IMR-90 (cell line): ENCODE measurements at regions of chr1 and their contacts with region 1.

Region 1: DNA sequence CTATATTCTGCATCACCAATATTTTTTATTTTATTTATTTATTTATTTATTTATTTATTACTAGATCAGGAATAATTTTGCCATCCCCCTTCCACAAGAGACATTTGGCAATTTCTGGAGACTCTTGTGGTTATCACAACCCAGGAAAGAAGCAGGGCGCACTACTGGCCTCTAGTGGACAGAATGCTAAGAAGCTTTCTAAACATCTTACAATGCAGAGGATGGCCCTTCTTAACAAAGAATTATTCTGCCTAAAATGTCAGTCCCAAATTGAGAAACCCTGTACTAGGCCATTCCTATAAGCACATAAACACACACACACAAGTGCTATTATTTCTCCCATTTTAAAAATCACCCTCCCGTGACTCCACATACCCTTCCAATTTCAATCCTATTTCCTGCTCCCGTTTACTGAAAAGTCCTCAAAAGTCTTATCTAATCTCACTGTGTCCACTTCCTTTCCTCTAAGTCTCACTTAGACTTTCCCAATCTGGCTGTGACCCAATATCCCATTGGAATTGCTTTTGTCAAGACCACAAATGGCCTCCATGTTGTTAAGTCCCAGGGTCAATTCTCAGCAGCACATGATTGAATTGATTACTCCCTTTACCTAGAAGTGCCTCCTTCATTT is 43.7 kb upstream of the RNF11 start:
- DNase-seq: peak; percentile 80
- ATAC-seq: peak; percentile 93
- H3K4me3 ChIP-seq: no peak overlapping the region
- H3K27ac ChIP-seq: no peak overlapping the region
- H3K4me1 ChIP-seq: no peaks in the 10 kb centered on the region
- H3K27me3 ChIP-seq: no peaks in the 10 kb centered on the region; the same call in 1 of the 2 replicates
- CTCF ChIP-seq: peak; percentile 82
- POLR2A ChIP-seq: no peak
- RAD21 ChIP-seq: peak; percentile 67

Region 2: GRCh38 chr1:50368179-50369012 is 823.9 kb before region 1 on chr1:
- CTCF ChIA-PET with region 1: no interaction called
- POLR2A ChIA-PET with region 1: no interaction called
- dilution Hi-C with region 1: no loop called
- in situ Hi-C with region 1: loop called (anchors 25 kb)
- intact Hi-C with region 1: loop called (anchors 5 kb)
- DNase-seq: peak; percentile 6
- ATAC-seq: peak; percentile 88
- H3K4me3 ChIP-seq: no peak overlapping the region
- H3K27ac ChIP-seq: no peak overlapping the region
- H3K4me1 ChIP-seq: no peaks in the 10 kb centered on the region
- H3K27me3 ChIP-seq: peaks cover 7% of the 10 kb centered on the region
- CTCF ChIP-seq: peak; percentile 78
- POLR2A ChIP-seq: 0 out of 2 replicates have a peak, but pooled peaks have one; percentile 45
- RAD21 ChIP-seq: peak; percentile 88

Region 3: GRCh38 chr1:50774759-50775351 is 417.5 kb before region 1 on chr1:
- CTCF ChIA-PET with region 1: interaction called, 21 read pairs
- POLR2A ChIA-PET with region 1: no interaction called
- dilution Hi-C with region 1: no loop called
- in situ Hi-C with region 1: loop called (anchors 5 kb)
- intact Hi-C with region 1: loop called (anchors 1 kb)
- DNase-seq: peak; percentile 74
- ATAC-seq: peak; percentile 60
- H3K4me3 ChIP-seq: no peak overlapping the region
- H3K27ac ChIP-seq: no peak overlapping the region
- H3K4me1 ChIP-seq: no peaks in the 10 kb centered on the region
- H3K27me3 ChIP-seq: no peaks in the 10 kb centered on the region
- CTCF ChIP-seq: peak; percentile 78
- POLR2A ChIP-seq: no peak
- RAD21 ChIP-seq: peak; percentile 83

Region 4: GRCh38 chr1:50929376-50929958 is 262.9 kb before region 1 on chr1:
- CTCF ChIA-PET with region 1: interaction called, 7 read pairs
- POLR2A ChIA-PET with region 1: no interaction called
- dilution Hi-C with region 1: no loop called
- in situ Hi-C with region 1: loop called (anchors 10 kb)
- intact Hi-C with region 1: loop called (anchors 1 kb)
- DNase-seq: peak; percentile 59
- ATAC-seq: peak; percentile 54; the same call in 1 of the 2 replicates
- H3K4me3 ChIP-seq: no peak overlapping the region
- H3K27ac ChIP-seq: no peak overlapping the region
- H3K4me1 ChIP-seq: peaks cover 2% of the 10 kb centered on the region; the same call in 1 of the 2 replicates
- H3K27me3 ChIP-seq: no peaks in the 10 kb centered on the region
- CTCF ChIP-seq: peak; percentile 61
- POLR2A ChIP-seq: no peak
- RAD21 ChIP-seq: peak; percentile 52

Region 5: DNA sequence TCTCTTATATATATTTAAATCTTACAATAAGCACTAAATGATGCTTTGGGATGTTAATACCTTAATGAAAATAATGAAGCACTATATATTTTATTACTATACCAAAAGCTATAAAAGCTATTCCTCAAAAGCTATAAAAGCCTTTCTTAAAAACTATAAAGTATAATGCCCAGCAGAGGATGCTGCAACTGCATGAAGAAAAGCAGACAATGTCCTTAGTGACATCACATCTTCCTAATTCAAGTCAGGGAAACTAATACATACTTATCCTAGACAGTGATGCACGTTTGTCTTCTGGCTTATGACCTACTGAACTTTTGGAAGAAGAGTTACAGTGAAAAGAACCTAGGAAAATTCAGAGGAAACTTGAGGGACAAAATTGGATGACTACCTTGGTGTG is 103.8 kb before region 1 on chr1:
- CTCF ChIA-PET with region 1: interaction called, 7 read pairs
- POLR2A ChIA-PET with region 1: no interaction called
- dilution Hi-C with region 1: no loop called
- in situ Hi-C with region 1: no loop called
- intact Hi-C with region 1: loop called (anchors 5 kb)
- DNase-seq: no peak
- ATAC-seq: no peak
- H3K4me3 ChIP-seq: no peak overlapping the region
- H3K27ac ChIP-seq: no peak overlapping the region
- H3K4me1 ChIP-seq: no peaks in the 10 kb centered on the region
- H3K27me3 ChIP-seq: peaks cover 9% of the 10 kb centered on the region
- CTCF ChIP-seq: peak; percentile 17; the same call in 1 of the 2 replicates
- POLR2A ChIP-seq: no peak
- RAD21 ChIP-seq: peak; percentile 39

Region 6: GRCh38 chr1:51296383-51297357 is 104.3 kb after region 1 on chr1:
- CTCF ChIA-PET with region 1: interaction called, 5 read pairs
- POLR2A ChIA-PET with region 1: no interaction called
- dilution Hi-C with region 1: no loop called
- in situ Hi-C with region 1: no loop called
- intact Hi-C with region 1: loop called (anchors 1 kb)
- DNase-seq: peak; percentile 62
- ATAC-seq: peak; percentile 98
- H3K4me3 ChIP-seq: peak overlapping the region; percentile 11; the same call in 1 of the 2 replicates
- H3K27ac ChIP-seq: no peak overlapping the region
- H3K4me1 ChIP-seq: no peaks in the 10 kb centered on the region
- H3K27me3 ChIP-seq: no peaks in the 10 kb centered on the region
- CTCF ChIP-seq: peak; percentile 90
- POLR2A ChIP-seq: no peak
- RAD21 ChIP-seq: peak; percentile 86